SK-N-SH (cell line): ENCODE measurements at regions of chr11 and their contacts with region 1.

Region 1: GRCh38 chr11:13772223-13773046 is 104.0 kb downstream of the FAR1 start:
- DNase-seq: peak; percentile 39
- H3K4me3 ChIP-seq: no peak overlapping the region
- H3K27ac ChIP-seq: no peak overlapping the region
- H3K4me1 ChIP-seq: no peaks in the 10 kb centered on the region
- H3K27me3 ChIP-seq: 0 out of 2 replicates have a peak, but pooled peaks cover 5% of the 10 kb centered on the region
- CTCF ChIP-seq: peak; percentile 60
- EP300 ChIP-seq: no peak
- RAD21 ChIP-seq: peak; percentile 84

Region 2: DNA sequence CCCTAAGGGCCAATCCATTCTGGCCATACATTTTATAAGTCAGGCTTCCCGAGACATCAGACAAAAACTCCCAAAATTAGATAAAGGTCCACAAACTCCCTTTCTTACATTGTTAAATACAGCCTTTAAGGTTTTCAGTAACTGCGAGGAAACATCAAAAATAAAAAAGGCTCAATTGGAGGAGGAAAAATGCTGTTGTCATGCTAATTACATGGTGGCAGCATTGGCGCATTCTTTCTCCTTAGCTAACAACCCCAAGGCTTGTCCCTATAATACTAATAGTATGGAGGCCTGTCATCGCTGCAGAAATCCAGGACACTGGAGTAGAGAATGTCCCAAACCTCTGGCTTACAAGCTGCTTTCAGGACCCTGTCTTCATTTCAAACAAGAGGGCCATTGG is 300.4 kb before region 1 on chr11:
- CTCF ChIA-PET with region 1: no interaction called
- POLR2A ChIA-PET with region 1: no interaction called
- DNase-seq: no peak
- H3K4me3 ChIP-seq: no peak overlapping the region
- H3K27ac ChIP-seq: no peak overlapping the region
- H3K4me1 ChIP-seq: no peaks in the 10 kb centered on the region
- H3K27me3 ChIP-seq: peaks cover 10% of the 10 kb centered on the region; the same call in 1 of the 2 replicates
- CTCF ChIP-seq: no peak
- EP300 ChIP-seq: no peak
- RAD21 ChIP-seq: no peak

Region 3: DNA sequence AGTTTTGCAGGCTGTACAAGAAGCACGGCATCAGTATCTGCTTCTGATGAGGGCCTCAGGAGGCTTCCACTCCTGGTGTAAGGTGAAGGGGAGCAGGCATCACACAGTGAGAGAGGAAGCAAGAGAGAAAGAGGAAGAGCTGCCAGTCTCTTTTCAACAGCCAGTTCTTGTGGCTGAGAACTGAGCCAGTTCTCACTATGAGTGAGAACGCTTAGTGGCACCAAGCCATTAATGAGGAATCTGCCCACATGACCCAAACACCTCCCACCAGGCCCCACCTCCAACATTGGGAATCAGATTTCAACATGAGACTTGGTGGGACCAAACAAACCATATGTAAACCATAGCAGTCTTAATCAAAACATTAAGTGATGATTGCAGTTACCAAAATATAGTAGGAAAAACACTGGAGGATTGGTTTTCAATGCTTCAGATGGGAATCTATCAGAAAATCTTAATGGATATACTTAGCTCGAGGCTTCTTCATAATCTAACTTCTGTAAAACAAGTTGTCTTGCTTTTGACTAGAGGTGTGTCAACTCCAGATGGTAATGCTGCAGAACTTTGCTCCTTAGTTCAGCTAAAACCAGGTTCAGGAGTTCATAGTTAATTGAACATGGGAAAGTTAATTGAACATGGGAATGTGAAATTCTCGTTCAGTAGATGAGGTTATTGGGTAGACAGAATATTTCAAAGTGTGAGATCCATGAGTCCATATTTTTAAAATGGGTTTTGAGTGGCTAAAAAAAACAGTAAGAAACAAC is 91.8 kb before region 1 on chr11:
- CTCF ChIA-PET with region 1: no interaction called
- POLR2A ChIA-PET with region 1: no interaction called
- DNase-seq: no peak
- H3K4me3 ChIP-seq: no peak overlapping the region
- H3K27ac ChIP-seq: no peak overlapping the region
- H3K4me1 ChIP-seq: peaks cover 8 to 18% of the 10 kb centered on the region in 2 experiments; a peak in 3 of 4 replicates
- H3K27me3 ChIP-seq: no peaks in the 10 kb centered on the region
- CTCF ChIP-seq: no peak
- EP300 ChIP-seq: no peak
- RAD21 ChIP-seq: no peak

Region 4: GRCh38 chr11:13786668-13787067 is 14.2 kb after region 1 on chr11:
- CTCF ChIA-PET with region 1: interaction called, 27 read pairs
- POLR2A ChIA-PET with region 1: no interaction called
- DNase-seq: no peak
- H3K4me3 ChIP-seq: no peak overlapping the region
- H3K27ac ChIP-seq: no peak overlapping the region
- H3K4me1 ChIP-seq: peaks cover 0 to 3% of the 10 kb centered on the region in 2 experiments; a peak in 1 of 4 replicates
- H3K27me3 ChIP-seq: no peaks in the 10 kb centered on the region
- CTCF ChIP-seq: no peak
- EP300 ChIP-seq: no peak
- RAD21 ChIP-seq: no peak

Region 5: DNA sequence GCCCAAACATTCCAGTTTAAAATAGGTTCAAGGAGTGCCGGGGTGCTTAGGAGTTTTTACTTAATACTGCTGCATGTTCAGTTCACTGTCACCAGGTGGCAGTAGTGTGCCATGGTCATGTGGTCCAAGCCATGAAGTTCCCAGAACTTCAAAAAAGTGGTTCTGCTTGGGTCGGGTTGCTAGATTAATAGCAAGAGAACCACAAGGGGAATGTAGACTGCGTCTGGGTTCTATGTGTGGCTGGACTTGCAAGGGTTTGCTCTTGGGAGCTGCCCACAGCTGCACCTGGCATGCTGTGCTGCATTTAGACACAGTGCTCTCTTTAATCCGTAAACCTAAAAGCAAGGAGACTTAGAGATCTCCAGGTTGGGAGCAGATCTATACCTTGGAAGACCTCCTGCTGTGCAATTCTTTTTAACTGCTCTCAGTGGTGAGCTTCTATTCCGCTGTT is 183.6 kb after region 1 on chr11:
- CTCF ChIA-PET with region 1: interaction called, 32 read pairs
- POLR2A ChIA-PET with region 1: no interaction called
- DNase-seq: peak; percentile 44
- H3K4me3 ChIP-seq: no peak overlapping the region; a peak in 1 of 4 replicates
- H3K27ac ChIP-seq: no peak overlapping the region
- H3K4me1 ChIP-seq: peaks cover 0 to 6% of the 10 kb centered on the region in 2 experiments; a peak in 1 of 4 replicates
- H3K27me3 ChIP-seq: peaks cover 11% of the 10 kb centered on the region; the same call in 1 of the 2 replicates
- CTCF ChIP-seq: peak; percentile 86
- EP300 ChIP-seq: no peak
- RAD21 ChIP-seq: peak; percentile 87

Region 6: GRCh38 chr11:14148653-14149273 is 376.3 kb after region 1 on chr11:
- CTCF ChIA-PET with region 1: interaction called, 33 read pairs
- POLR2A ChIA-PET with region 1: no interaction called
- DNase-seq: no peak
- H3K4me3 ChIP-seq: no peak overlapping the region
- H3K27ac ChIP-seq: no peak overlapping the region
- H3K4me1 ChIP-seq: peaks cover 0 to 10% of the 10 kb centered on the region in 2 experiments; a peak in 2 of 4 replicates
- H3K27me3 ChIP-seq: no peaks in the 10 kb centered on the region
- CTCF ChIP-seq: peak; percentile 62
- EP300 ChIP-seq: no peak
- RAD21 ChIP-seq: peak; percentile 70